ENCODE measurements at regions of chr12 and their contacts with region 1.

Region 1: GRCh38 chr12:751192-751998 is 984 bp upstream of the WNK1 start:
- DNase-seq: peak; percentile 88
- ATAC-seq: peak; percentile 66
- H3K4me3 Mint-ChIP-seq: no peak overlapping the region
- H3K27ac Mint-ChIP-seq: no peak overlapping the region
- H3K4me1 Mint-ChIP-seq: peaks cover 22% of the 10 kb centered on the region
- H3K27me3 Mint-ChIP-seq: no peaks in the 10 kb centered on the region

Region 2: DNA sequence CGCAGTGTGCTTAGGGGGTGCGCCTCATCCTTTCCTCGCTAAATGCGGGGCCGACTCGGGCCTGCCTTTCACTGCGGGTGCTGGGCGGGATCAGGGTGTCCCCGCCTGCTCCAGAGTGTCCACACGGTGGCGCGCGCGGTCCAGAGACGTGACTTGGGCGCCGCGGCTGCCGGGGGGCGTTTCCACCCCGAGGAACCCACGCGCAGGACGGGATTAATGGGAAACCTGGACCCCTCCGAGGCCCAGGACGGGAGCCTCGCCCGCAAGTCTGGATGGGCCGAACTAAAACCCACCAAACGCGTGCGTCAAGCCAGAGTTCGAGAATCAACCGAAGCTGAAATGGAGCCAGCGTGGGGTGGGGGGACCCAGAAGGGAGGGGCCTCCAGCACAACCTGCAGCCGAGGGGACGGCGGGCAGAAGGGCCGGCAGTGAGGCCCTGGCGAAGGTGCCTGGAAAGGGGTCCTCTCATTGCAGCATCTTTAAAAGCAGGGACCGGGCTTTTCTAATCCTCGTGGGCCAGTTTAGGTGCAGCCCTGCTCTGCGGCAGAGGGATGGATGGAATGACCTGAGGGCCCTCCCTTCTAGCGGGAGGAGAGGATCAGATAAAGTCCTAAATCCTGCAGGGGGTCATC is 181.5 kb before region 1 on chr12:
- POLR2A ChIA-PET with region 1: interaction called, 38 read pairs
- DNase-seq: peak; percentile 94
- ATAC-seq: peak; percentile 94
- H3K4me3 Mint-ChIP-seq: peak overlapping the region; percentile 86
- H3K27ac Mint-ChIP-seq: peak overlapping the region; percentile 69
- H3K4me1 Mint-ChIP-seq: peaks cover 53% of the 10 kb centered on the region
- H3K27me3 Mint-ChIP-seq: no peaks in the 10 kb centered on the region

Region 3: DNA sequence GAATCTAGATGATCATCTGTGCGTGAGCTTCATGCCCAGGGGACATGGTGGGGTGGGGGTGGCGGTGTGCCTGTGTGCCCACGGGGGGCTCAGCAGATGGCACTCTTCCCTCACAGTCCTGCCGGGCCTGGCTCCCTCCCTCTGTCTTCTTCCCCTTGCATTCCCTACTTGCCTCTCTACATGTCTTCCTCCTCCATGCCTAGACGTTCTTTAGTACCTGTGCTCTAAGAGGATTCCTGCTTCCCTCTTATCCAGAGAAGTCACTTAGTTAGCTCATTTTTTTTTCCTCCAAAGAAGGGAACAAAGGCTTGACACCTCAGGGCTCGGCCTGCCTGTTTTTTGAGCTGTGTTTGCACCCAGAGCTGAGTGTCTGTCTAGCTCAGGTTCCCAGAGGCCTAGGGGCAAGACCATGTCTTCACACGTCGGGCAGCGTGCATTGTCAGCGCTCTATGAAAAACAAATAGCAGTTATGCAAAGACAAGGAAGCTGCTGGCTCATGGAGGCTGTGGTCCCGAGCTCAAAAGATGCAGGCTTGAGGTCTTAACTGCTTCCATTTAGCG is 136.9 kb before region 1 on chr12:
- POLR2A ChIA-PET with region 1: interaction called, 23 read pairs
- DNase-seq: peak; percentile 24
- ATAC-seq: no peak
- H3K4me3 Mint-ChIP-seq: no peak overlapping the region
- H3K27ac Mint-ChIP-seq: no peak overlapping the region
- H3K4me1 Mint-ChIP-seq: peaks cover 53% of the 10 kb centered on the region
- H3K27me3 Mint-ChIP-seq: no peaks in the 10 kb centered on the region

Region 4: GRCh38 chr12:642633-643474 is 108.5 kb before region 1 on chr12:
- POLR2A ChIA-PET with region 1: interaction called, 44 read pairs
- DNase-seq: peak; percentile 92
- ATAC-seq: peak; percentile 88
- H3K4me3 Mint-ChIP-seq: peak overlapping the region; percentile 73
- H3K27ac Mint-ChIP-seq: peak overlapping the region; percentile 91
- H3K4me1 Mint-ChIP-seq: peaks cover 62% of the 10 kb centered on the region
- H3K27me3 Mint-ChIP-seq: no peaks in the 10 kb centered on the region

Region 5: GRCh38 chr12:662566-663292 is 88.7 kb before region 1 on chr12:
- POLR2A ChIA-PET with region 1: interaction called, 31 read pairs
- DNase-seq: peak; percentile 21
- ATAC-seq: no peak
- H3K4me3 Mint-ChIP-seq: peak overlapping the region; percentile 75
- H3K27ac Mint-ChIP-seq: peak overlapping the region; percentile 74
- H3K4me1 Mint-ChIP-seq: peaks cover 38% of the 10 kb centered on the region
- H3K27me3 Mint-ChIP-seq: no peaks in the 10 kb centered on the region

Region 6: DNA sequence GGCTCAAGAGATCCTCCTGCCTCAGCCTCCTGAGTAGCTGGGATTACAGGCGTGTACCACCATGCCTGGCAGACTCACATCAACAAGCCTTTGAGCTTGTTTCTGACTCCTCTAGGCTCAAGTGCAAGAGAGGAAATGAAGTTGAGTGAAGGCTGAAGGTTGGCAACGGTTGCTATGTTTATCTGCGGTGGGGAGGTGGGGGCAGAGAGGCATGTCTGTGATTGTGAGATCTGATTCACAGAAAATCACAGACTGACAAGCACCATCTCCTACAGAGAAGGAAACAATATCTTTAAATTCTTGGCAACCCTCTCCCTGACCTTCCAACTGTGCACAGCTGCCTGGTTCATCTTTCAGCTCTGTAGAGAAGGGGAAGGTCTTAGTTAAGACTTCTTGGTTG is 66.0 kb before region 1 on chr12:
- POLR2A ChIA-PET with region 1: interaction called, 87 read pairs
- DNase-seq: peak; percentile 72
- ATAC-seq: peak; percentile 97
- H3K4me3 Mint-ChIP-seq: peak overlapping the region; percentile 70
- H3K27ac Mint-ChIP-seq: peak overlapping the region; percentile 93
- H3K4me1 Mint-ChIP-seq: peaks cover 28% of the 10 kb centered on the region
- H3K27me3 Mint-ChIP-seq: no peaks in the 10 kb centered on the region

Region 7: DNA sequence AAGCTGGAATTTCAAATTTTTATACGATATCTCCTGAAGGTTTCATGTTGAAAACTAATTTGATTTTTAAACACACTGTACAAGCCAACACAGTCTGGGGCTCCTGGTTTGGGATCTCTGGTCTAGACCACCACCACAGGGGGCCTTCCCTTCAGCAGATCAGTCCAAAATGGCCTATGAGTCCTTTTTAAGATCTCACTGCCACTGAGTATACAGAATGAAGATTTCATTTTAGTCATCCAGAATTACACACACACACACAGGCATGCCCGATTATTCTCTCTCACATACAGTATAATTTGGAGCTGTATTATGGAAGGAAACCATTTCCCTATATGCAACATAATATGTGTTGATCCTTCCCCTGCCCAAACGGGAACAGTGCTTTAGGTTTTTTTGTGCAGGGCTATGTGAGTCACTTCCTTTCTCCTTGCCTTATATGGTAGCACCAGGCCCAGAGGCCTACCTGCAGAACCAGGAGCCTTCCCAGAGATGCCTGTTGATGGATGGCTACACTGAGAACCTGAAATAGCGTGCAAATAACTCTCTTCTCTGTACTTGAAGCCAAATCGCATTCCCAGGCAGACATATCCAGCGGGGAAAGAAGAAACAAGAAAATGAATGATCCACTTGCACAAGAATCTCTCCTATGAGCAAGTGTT is 27.1 kb before region 1 on chr12:
- POLR2A ChIA-PET with region 1: interaction called, 71 read pairs
- DNase-seq: no peak
- ATAC-seq: peak; percentile 77
- H3K4me3 Mint-ChIP-seq: peak overlapping the region; percentile 59
- H3K27ac Mint-ChIP-seq: peak overlapping the region; percentile 77
- H3K4me1 Mint-ChIP-seq: peaks cover 59% of the 10 kb centered on the region
- H3K27me3 Mint-ChIP-seq: no peaks in the 10 kb centered on the region